Activated CD4-positive, alpha-beta T cell treated with anti-CD3 and anti-CD28 coated beads, Interleukin-2, amount 10 ng/mL, durations not matched to agents 24 days and 14 days (primary cell): ENCODE measurements at regions of chr6 and their contacts with region 1.

Region 1: GRCh38 chr6:134979142-134979541 is 29.2 kb upstream of the ALDH8A1 start:
- DNase-seq: peak; percentile 81
- H3K4me3 Mint-ChIP-seq: peak overlapping the region; percentile 14
- H3K27ac Mint-ChIP-seq: peak overlapping the region; percentile 71
- H3K4me1 Mint-ChIP-seq: peaks cover 39% of the 10 kb centered on the region
- H3K27me3 Mint-ChIP-seq: no peaks in the 10 kb centered on the region

Region 2: GRCh38 chr6:134961366-134961765 is 17.8 kb before region 1 on chr6:
- intact Hi-C with region 1: loop called (anchors 1 kb)
- DNase-seq: peak; percentile 53
- H3K4me3 Mint-ChIP-seq: no peak overlapping the region
- H3K27ac Mint-ChIP-seq: peak overlapping the region; percentile 31
- H3K4me1 Mint-ChIP-seq: peaks cover 17% of the 10 kb centered on the region
- H3K27me3 Mint-ChIP-seq: no peaks in the 10 kb centered on the region

Region 3: DNA sequence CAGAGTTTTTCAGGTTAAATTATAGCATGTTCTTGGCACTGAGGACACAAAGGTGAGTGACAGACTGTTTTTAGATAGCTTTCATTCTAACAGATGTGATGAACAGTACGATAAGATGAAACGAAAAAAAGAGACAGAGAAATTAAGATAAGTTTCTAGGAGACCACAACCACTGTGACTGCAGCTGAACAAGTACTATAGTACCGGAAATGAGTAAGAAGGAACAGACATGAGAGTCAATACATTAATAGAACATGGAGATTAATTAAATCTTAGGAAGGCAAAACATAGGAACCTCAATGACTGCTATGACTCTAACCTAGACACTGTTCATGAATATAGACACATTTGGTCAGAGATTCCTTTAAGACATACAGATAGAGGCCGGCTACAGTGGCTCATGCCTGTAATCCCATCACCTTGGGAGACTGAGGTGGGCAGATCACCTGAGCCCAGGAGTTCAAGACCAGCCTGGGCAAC is 35.3 kb after region 1 on chr6:
- intact Hi-C with region 1: loop called (anchors 1 kb)
- DNase-seq: peak; percentile 70
- H3K4me3 Mint-ChIP-seq: peak overlapping the region; percentile 70
- H3K27ac Mint-ChIP-seq: peak overlapping the region; percentile 78
- H3K4me1 Mint-ChIP-seq: peaks cover 47% of the 10 kb centered on the region
- H3K27me3 Mint-ChIP-seq: no peaks in the 10 kb centered on the region

Region 4: GRCh38 chr6:135054569-135055498 is 75.7 kb after region 1 on chr6 and contains the start of gene HBS1L:
- intact Hi-C with region 1: loop called (anchors 2 kb)
- DNase-seq: peak; percentile 99
- H3K4me3 Mint-ChIP-seq: peak within 1 kb of the TSS; percentile 92
- H3K27ac Mint-ChIP-seq: peak within 1 kb of the TSS; percentile 94
- H3K4me1 Mint-ChIP-seq: peaks cover 32% of the 10 kb centered on the region
- H3K27me3 Mint-ChIP-seq: no peaks in the 10 kb centered on the region
- total RNA-seq, gene HBS1L: 94.4 and 104 TPM in 2 replicates

Region 5: DNA sequence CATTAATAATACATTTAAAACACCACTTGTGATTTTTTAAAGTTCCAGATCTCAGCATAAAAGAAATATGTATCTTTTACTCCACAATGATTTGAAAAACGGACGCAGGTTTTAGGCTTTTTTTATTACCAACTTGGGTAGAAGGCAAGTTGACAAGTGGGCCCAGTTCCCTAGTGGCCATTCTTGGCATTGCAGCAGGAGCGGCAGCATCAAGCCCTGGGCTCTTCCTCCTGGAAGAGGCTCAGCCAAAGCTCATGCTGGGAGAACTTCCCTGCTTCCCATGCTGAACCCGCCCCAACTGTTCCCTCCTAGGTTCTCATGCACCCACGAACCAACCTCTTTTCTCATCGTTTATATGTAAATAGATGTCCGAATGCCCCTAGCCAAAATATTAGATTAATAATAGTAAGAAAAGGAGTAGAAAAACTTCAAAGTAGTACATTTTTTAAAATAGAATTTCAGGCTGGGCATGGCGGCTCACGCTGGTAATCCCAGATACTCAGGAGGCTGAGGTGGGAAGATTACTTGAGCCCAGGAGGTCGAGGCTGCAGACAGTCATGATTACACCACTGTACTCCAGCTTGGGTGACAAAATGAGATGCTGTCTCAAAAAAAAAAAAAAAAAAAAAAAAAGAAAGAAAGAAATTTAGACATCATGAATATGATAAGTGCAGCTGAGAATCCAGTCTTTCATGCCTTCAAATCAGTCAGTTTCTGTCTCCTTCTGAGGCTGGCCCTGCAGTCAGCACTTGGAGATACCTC is 183.7 kb after region 1 on chr6:
- intact Hi-C with region 1: loop called (anchors 1 kb)
- DNase-seq: peak; percentile 75
- H3K4me3 Mint-ChIP-seq: peak overlapping the region; percentile 61
- H3K27ac Mint-ChIP-seq: peak overlapping the region; percentile 93
- H3K4me1 Mint-ChIP-seq: peaks cover 47% of the 10 kb centered on the region
- H3K27me3 Mint-ChIP-seq: no peaks in the 10 kb centered on the region